ENCODE measurements at regions of chr2 and their contacts with region 1.

Region 1: GRCh38 chr2:85266146-85267041 is 61.4 kb downstream of the TGOLN2 start:
- DNase-seq: no peak
- H3K4me3 ChIP-seq: no peak overlapping the region
- H3K27me3 ChIP-seq: no peaks in the 10 kb centered on the region
- CTCF ChIP-seq: peak; percentile 86

Region 2: GRCh38 chr2:85234868-85235267 is 31.5 kb before region 1 on chr2:
- CTCF ChIA-PET with region 1: no interaction called
- POLR2A ChIA-PET with region 1: no interaction called
- DNase-seq: no peak
- H3K4me3 ChIP-seq: no peak overlapping the region
- H3K27me3 ChIP-seq: no peaks in the 10 kb centered on the region
- CTCF ChIP-seq: no peak

Region 3: GRCh38 chr2:85250045-85250444 is 16.3 kb before region 1 on chr2:
- CTCF ChIA-PET with region 1: interaction called, 13 read pairs
- POLR2A ChIA-PET with region 1: no interaction called
- DNase-seq: no peak
- H3K4me3 ChIP-seq: no peak overlapping the region
- H3K27me3 ChIP-seq: no peaks in the 10 kb centered on the region
- CTCF ChIP-seq: no peak

Region 4: GRCh38 chr2:85255813-85256594 is 10.4 kb before region 1 on chr2:
- CTCF ChIA-PET with region 1: interaction called, 13 read pairs
- POLR2A ChIA-PET with region 1: no interaction called
- DNase-seq: no peak
- H3K4me3 ChIP-seq: no peak overlapping the region; the same call in 1 of the 2 replicates
- H3K27me3 ChIP-seq: no peaks in the 10 kb centered on the region
- CTCF ChIP-seq: no peak

Region 5: GRCh38 chr2:85457877-85458316 is 191.5 kb after region 1 on chr2:
- CTCF ChIA-PET with region 1: no interaction called
- POLR2A ChIA-PET with region 1: no interaction called
- DNase-seq: no peak
- H3K4me3 ChIP-seq: no peak overlapping the region
- H3K27me3 ChIP-seq: peaks cover 3% of the 10 kb centered on the region
- CTCF ChIP-seq: no peak

Measured in BJ (cell line).